ENCODE measurements at regions of chr12 and their contacts with region 1.

Region 1: DNA sequence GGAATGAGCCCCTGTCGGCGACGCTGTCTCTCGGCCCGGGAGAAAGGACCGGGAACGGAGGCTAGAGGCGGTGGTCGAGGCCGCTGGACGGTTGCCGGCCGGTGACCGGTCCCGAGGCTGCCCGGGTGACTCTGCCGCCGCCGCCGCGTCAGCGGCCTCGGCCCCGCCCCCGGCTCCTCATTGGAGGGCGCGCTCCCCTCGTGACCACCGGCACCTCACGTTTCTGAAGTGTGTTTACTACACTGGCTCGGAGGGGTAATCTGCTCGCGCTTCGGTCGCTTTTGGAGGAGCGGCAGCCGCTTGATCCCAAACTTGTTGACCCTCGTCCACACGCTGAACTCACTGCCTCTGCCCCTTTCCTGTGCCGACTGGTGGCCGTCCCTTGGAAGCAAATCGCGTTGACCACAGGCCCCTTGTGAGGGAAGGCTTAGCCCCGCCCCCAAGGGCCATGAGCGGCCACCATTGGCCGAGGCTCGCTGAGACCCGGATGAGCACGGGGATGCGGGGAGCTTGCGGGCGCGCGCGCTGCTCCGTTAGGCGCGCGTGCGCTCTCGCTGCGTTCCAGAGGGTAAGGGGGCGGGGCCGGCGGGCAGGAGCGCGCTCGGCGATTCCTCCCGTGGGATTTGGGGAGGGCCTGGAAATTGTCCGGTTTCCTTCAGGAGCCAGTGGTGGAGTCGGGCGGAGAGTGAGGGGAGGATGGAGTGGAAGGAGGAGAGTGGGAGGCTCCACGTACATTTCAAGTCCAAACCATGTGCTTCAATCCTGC is at the start of gene CRY1:
- DNase-seq: peak; percentile 96
- ATAC-seq: peak; percentile 83
- H3K4me3 Mint-ChIP-seq: no peak within 1 kb of the TSS
- H3K27ac Mint-ChIP-seq: peak within 1 kb of the TSS; percentile 99
- H3K4me1 Mint-ChIP-seq: peaks cover 3% of the 10 kb centered on the region
- H3K27me3 Mint-ChIP-seq: peaks cover 7% of the 10 kb centered on the region
- total RNA-seq, gene CRY1: 14.8 to 17.7 TPM

Region 2: DNA sequence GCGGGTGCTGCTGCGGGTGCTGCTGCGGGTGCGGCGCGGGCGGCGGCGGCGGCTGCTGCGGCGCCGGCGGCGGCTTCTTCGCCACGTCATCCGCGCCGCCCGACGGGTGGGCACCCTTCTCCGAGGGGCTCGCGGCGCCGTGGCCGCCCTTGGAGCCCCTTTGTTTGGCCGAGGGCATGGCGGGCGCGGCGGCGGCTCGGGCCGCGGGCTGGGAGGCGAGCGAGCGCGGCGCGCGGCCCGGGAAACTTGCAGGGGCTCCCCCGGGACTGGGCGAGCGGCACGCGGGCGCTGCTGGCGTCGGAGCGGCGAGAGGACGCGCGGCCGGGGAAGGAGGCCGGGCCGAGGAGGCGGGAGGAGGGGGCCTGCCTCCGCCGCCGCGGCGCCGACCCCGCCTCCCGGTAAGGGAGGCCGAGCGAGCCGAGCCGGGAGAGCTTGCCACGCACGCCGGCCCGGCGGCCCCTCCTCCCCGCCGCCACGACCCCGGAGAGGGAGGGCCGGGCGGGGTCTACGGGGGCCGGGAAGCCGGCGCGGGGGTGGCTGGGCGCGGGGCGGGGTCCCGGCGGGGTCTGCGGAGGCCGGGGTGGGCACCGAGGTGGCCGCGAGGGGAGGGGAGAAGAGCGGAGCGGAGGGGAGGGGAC is 845.8 kb before region 1 on chr12 and contains the start of gene CKAP4:
- CTCF ChIA-PET with region 1: no interaction called
- POLR2A ChIA-PET with region 1: no interaction called
- intact Hi-C with region 1: loop called in 1 of 2 experiments (anchors 5 kb)
- DNase-seq: peak; percentile 72
- ATAC-seq: peak; percentile 49
- H3K4me3 Mint-ChIP-seq: peak within 1 kb of the TSS; percentile 68
- H3K27ac Mint-ChIP-seq: peak within 1 kb of the TSS; percentile 80
- H3K4me1 Mint-ChIP-seq: peaks cover 30% of the 10 kb centered on the region
- H3K27me3 Mint-ChIP-seq: no peaks in the 10 kb centered on the region
- total RNA-seq, gene CKAP4: 13.7 to 15.6 TPM

Region 3: GRCh38 chr12:106551410-106551809 is 542.2 kb before region 1 on chr12:
- CTCF ChIA-PET with region 1: no interaction called
- POLR2A ChIA-PET with region 1: no interaction called
- intact Hi-C with region 1: no loop called
- DNase-seq: no peak
- ATAC-seq: no peak
- H3K4me3 Mint-ChIP-seq: no peak overlapping the region
- H3K27ac Mint-ChIP-seq: no peak overlapping the region
- H3K4me1 Mint-ChIP-seq: no peaks in the 10 kb centered on the region
- H3K27me3 Mint-ChIP-seq: peaks cover 25% of the 10 kb centered on the region

Region 4: GRCh38 chr12:106774005-106774807 is 319.4 kb before region 1 on chr12 and contains the start of gene RIC8B:
- CTCF ChIA-PET with region 1: no interaction called
- POLR2A ChIA-PET with region 1: no interaction called
- intact Hi-C with region 1: loop called in 1 of 2 experiments (anchors 1 kb)
- DNase-seq: peak; percentile 89
- ATAC-seq: peak; percentile 92
- H3K4me3 Mint-ChIP-seq: peak within 1 kb of the TSS; percentile 95
- H3K27ac Mint-ChIP-seq: peak within 1 kb of the TSS; percentile 98
- H3K4me1 Mint-ChIP-seq: peaks cover 32% of the 10 kb centered on the region
- H3K27me3 Mint-ChIP-seq: no peaks in the 10 kb centered on the region
- total RNA-seq, gene RIC8B: 10.7 to 11.3 TPM

Region 5: DNA sequence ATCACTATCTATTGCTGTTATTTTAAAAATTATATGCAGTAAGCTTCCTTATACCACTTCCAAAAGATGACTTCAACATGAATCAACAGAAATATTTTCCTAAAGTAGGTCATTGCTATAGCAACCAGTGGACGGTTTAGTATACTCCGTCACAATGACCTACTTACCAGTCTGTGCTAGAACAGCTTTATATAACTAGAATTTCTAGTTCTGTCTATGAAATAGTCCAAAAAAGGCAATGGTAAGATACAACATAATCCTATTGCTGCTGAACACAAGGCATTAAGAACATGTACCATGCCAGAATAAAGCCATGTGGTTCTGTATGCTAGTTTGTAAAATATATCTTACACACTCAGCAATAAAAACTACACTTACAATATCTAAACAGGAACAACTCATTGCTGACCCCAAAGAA is 66.0 kb before region 1 on chr12:
- CTCF ChIA-PET with region 1: no interaction called
- POLR2A ChIA-PET with region 1: no interaction called
- intact Hi-C with region 1: loop called (anchors 2 to 5 kb)
- DNase-seq: no peak
- ATAC-seq: peak; percentile 94
- H3K4me3 Mint-ChIP-seq: no peak overlapping the region
- H3K27ac Mint-ChIP-seq: peak overlapping the region; percentile 76
- H3K4me1 Mint-ChIP-seq: peaks cover 41% of the 10 kb centered on the region
- H3K27me3 Mint-ChIP-seq: no peaks in the 10 kb centered on the region

Region 6: DNA sequence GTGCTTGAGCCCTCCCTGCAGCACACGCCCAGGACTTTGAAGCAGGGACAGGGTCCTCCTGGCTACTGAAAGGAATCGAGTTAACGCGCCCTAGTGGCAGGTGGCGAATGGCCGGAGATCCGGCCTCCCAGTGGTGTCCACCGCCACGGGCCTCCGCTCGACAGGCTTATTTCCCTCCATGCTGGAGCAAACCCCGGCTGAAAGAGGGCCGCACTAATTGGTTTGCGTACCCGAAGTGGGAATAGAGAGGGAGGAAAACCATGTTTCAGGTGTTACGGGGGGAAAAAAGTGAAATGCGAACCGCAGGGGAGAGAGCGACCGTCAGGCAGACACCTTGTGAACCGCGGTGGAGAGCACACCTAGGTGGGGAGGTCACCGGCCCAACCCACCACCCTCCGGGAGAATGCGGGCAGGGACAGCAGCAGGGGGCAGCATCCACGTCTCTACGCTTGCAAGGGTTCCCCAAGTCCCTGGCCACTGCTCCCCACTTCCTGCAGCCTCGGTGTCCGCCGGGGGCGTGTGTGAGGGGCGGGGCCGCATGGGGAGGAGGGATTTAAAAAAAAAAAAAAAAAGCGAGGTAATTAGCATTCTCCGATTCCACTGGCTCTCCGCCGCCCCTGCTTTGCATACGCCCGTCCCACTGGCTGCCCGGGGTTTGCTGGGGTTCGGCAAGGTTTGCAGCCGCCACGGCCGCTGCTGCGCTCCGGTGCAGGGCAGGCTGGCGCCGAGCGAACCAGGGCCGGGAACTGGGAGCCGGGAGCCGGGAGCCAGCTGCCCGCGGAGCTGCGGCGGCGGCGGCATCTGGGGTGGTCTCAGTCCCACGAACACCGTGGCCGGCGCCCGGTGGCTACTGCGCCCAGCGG is 224.4 kb after region 1 on chr12:
- CTCF ChIA-PET with region 1: no interaction called
- POLR2A ChIA-PET with region 1: interaction called, 3 read pairs
- intact Hi-C with region 1: loop called (anchors 1 to 2 kb)
- DNase-seq: peak; percentile 93
- ATAC-seq: peak; percentile 66
- H3K4me3 Mint-ChIP-seq: peak overlapping the region; percentile 86
- H3K27ac Mint-ChIP-seq: no peak overlapping the region
- H3K4me1 Mint-ChIP-seq: peaks cover 27% of the 10 kb centered on the region
- H3K27me3 Mint-ChIP-seq: peaks cover 2% of the 10 kb centered on the region

Region 7: GRCh38 chr12:107685360-107686248 is 592.0 kb after region 1 on chr12 and contains the start of gene PWP1:
- CTCF ChIA-PET with region 1: no interaction called
- POLR2A ChIA-PET with region 1: interaction called, 3 read pairs
- intact Hi-C with region 1: loop called in 1 of 2 experiments (anchors 1 kb)
- DNase-seq: peak; percentile 97
- ATAC-seq: peak; percentile 92
- H3K4me3 Mint-ChIP-seq: peak within 1 kb of the TSS; percentile 94
- H3K27ac Mint-ChIP-seq: peak within 1 kb of the TSS; percentile 94
- H3K4me1 Mint-ChIP-seq: peaks cover 27% of the 10 kb centered on the region
- H3K27me3 Mint-ChIP-seq: no peaks in the 10 kb centered on the region
- total RNA-seq, gene PWP1: 59.5 to 60.0 TPM